IMR-90 (cell line): ENCODE measurements at regions of chr3 and their contacts with region 1.

Region 1: GRCh38 chr3:7275396-7275795 is 414.5 kb downstream of the GRM7 start:
- DNase-seq: no peak
- ATAC-seq: no peak
- H3K4me3 ChIP-seq: no peak overlapping the region
- H3K27ac ChIP-seq: no peak overlapping the region
- H3K4me1 ChIP-seq: no peaks in the 10 kb centered on the region
- H3K27me3 ChIP-seq: no peaks in the 10 kb centered on the region
- CTCF ChIP-seq: no peak
- POLR2A ChIP-seq: no peak
- RAD21 ChIP-seq: no peak

Region 2: GRCh38 chr3:7241584-7242302 is 33.7 kb before region 1 on chr3:
- CTCF ChIA-PET with region 1: no interaction called
- POLR2A ChIA-PET with region 1: no interaction called
- dilution Hi-C with region 1: no loop called
- in situ Hi-C with region 1: no loop called
- intact Hi-C with region 1: loop called (anchors 2 kb)
- DNase-seq: no peak
- ATAC-seq: no peak
- H3K4me3 ChIP-seq: no peak overlapping the region
- H3K27ac ChIP-seq: no peak overlapping the region
- H3K4me1 ChIP-seq: no peaks in the 10 kb centered on the region
- H3K27me3 ChIP-seq: no peaks in the 10 kb centered on the region
- CTCF ChIP-seq: no peak
- POLR2A ChIP-seq: no peak
- RAD21 ChIP-seq: no peak